ENCODE measurements at regions of chr2 and their contacts with region 1.

Region 1: DNA sequence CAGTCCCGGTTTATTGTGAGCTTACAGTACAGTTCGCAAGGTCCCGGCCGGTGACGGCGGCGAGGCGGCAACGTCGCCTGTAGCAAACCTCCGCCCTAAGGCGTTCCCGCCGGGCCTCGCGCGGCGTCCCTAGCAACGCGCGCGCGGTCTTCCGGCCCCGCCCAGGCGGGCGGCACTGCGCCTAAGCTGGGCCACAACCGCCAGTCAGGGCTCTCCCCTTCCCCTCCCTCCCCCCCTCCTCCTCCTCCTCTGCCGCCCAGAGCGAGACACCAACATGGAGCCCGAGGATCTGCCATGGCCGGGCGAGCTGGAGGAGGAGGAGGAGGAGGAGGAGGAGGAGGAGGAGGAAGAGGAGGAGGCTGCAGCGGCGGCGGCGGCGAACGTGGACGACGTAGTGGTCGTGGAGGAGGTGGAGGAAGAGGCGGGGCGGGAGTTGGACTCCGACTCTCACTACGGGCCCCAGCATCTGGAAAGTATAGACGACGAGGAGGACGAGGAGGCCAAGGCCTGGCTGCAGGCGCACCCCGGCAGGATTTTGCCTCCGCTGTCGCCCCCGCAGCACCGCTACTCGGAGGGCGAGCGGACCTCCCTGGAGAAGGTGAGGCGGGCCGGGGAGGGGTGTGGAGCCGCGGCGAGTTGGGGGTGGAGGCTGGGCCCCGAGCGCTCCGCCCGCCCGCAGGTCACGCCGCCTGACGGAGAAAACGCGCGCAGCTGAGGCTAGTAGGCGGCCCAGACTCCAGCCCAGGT is at the start of gene ALMS1:
- DNase-seq: peak; percentile 91
- H3K4me3 Mint-ChIP-seq: peak within 1 kb of the TSS; percentile 92
- H3K27ac Mint-ChIP-seq: peak within 1 kb of the TSS; percentile 86
- H3K4me1 Mint-ChIP-seq: peaks cover 28% of the 10 kb centered on the region
- H3K27me3 Mint-ChIP-seq: no peaks in the 10 kb centered on the region
- total RNA-seq, gene ALMS1: 15.4 to 15.8 TPM

Region 2: DNA sequence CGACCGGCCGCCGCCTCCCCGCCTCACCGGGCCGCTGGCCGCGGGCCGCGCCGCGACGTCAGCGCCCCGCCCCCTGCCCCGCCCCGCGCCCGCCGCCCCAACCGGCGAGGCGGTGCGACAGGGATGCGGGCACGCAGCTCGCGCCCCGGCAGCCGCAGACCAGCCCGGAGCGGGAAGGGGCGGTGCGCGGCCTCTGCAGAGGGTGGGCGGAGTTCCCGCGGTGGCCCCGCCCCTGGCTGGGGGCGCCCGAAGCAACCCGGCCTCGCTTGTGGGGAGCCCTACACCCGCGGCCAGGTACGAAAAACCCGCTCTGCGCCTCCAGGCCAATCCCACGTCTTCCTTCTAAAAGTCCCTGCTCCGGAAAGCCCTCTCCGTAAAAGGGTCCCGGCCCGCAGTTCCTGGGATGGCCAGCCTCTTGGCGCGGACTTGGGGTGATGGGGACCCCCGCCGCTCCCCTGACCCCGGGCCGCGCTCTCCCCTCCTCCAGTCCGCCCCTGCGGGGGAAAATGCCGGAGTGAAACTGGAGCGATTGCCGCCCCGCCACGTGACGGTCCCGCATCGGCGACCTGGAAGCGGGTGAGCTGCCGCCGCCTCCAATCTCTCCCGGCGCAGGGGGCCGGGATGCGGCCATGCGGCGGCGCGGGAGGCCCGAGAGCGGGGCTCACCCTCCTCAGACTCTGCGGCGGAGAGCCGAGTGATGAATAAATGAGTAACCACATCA is 272.7 kb before region 1 on chr2 and contains the start of gene RAB11FIP5:
- CTCF ChIA-PET with region 1: no interaction called
- intact Hi-C with region 1: loop called (anchors 1 kb)
- DNase-seq: peak; percentile 78
- H3K4me3 Mint-ChIP-seq: peak within 1 kb of the TSS; percentile 81
- H3K27ac Mint-ChIP-seq: no peak within 1 kb of the TSS
- H3K4me1 Mint-ChIP-seq: peaks cover 21% of the 10 kb centered on the region
- H3K27me3 Mint-ChIP-seq: no peaks in the 10 kb centered on the region
- total RNA-seq, gene RAB11FIP5: 7.3 to 7.4 TPM

Region 3: DNA sequence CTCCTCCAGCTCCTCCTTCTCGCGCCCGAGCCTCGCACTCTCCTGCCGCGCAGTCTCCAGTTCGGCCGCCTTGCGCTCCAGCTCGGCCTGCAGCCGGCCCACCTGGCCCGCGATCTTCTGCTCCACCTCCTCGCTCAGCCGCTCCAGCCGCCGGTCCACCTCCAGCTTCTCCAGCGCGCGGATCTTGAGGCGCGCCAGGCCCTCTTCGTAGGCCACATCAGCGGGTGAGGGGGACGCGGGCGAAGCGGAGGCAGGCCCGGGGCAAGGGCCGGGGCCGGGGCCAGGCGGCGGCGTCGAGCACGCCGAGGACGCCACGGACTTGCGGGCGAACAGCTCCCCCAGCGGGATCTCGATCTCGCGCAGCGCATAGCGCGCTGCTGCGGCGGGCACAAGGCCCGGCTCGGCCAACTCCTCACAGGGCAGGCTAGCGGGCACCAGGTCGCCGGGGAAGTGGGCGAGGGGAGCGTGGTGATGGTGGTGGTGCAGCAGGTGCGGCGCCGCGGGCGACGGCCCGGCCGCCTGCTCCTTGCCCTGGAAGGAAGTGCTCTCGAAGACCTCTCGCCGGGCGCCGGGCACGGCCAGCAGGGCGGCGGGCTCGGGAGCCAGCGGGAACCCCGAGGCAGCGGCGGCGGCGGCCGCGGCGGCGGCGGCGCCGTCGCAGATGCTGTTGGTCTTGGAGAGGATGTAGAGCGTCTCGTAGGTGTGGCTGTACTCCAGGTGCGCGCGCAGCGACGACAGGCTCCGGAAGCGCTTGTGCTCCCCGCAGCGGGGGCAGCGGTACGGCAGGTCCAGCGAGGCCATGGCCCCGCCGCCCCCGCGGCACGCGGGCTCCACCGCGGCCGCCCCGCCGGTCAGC is 116.7 kb before region 1 on chr2:
- CTCF ChIA-PET with region 1: no interaction called
- intact Hi-C with region 1: loop called (anchors 1 kb)
- DNase-seq: peak; percentile 79
- H3K4me3 Mint-ChIP-seq: peak overlapping the region; percentile 17
- H3K27ac Mint-ChIP-seq: no peak overlapping the region
- H3K4me1 Mint-ChIP-seq: peaks cover 13% of the 10 kb centered on the region
- H3K27me3 Mint-ChIP-seq: no peaks in the 10 kb centered on the region

Region 4: DNA sequence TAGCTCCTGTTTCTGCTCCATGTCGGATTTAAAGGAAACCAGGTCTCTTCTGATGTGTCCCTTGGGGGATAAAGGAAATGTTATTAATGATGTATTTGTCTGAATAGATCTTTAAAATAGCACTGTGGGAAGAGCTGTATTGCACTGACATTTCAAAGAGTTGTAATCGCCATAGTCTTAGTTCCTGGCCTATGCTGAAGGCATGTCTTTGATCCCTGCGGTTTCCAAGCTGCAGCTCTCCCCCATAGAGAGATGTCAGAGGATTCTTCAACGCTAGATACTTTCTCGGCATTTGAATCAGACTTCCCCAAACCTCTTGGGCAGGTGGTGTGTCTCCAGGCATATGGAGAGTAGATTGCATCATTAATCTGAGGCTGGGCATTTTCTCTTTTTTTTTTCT is 216.0 kb after region 1 on chr2:
- CTCF ChIA-PET with region 1: no interaction called
- intact Hi-C with region 1: loop called (anchors 5 kb)
- DNase-seq: no peak
- H3K4me3 Mint-ChIP-seq: no peak overlapping the region
- H3K27ac Mint-ChIP-seq: no peak overlapping the region
- H3K4me1 Mint-ChIP-seq: peaks cover 6% of the 10 kb centered on the region
- H3K27me3 Mint-ChIP-seq: no peaks in the 10 kb centered on the region

Region 5: GRCh38 chr2:73926493-73927338 is 540.9 kb after region 1 on chr2 and contains the start of gene DGUOK:
- CTCF ChIA-PET with region 1: no interaction called
- intact Hi-C with region 1: loop called (anchors 5 kb)
- DNase-seq: peak; percentile 99
- H3K4me3 Mint-ChIP-seq: peak within 1 kb of the TSS; percentile 87
- H3K27ac Mint-ChIP-seq: peak within 1 kb of the TSS; percentile 94
- H3K4me1 Mint-ChIP-seq: peaks cover 44% of the 10 kb centered on the region
- H3K27me3 Mint-ChIP-seq: no peaks in the 10 kb centered on the region
- total RNA-seq, gene DGUOK: 112 to 115 TPM

Measured in activated naive CD4-positive, alpha-beta T cell treated with anti-CD3 and anti-CD28 coated beads for 36 hours (primary cell).